CD8-positive, alpha-beta memory T cell (primary cell): ENCODE measurements at regions of chr12 and their contacts with region 1.

Region 1: GRCh38 chr12:122399592-122400373 is 22.7 kb downstream of the CLIP1 start:
- DNase-seq: peak; percentile 14 to 61 (median 53)
- H3K4me3 ChIP-seq: peak overlapping the region; percentile 11
- H3K4me3 Mint-ChIP-seq: no peak overlapping the region
- H3K27ac ChIP-seq: peak overlapping the region; percentile 82
- H3K27ac Mint-ChIP-seq: peak overlapping the region in 7 of 8 donors; percentile 6 to 88 (median 70)
- H3K4me1 ChIP-seq: peaks cover 9% of the 10 kb centered on the region
- H3K4me1 Mint-ChIP-seq: peaks cover 21 to 42% (median 34%) of the 10 kb centered on the region in 3 donors
- H3K27me3 ChIP-seq: no peaks in the 10 kb centered on the region
- H3K27me3 Mint-ChIP-seq: no peaks in the 10 kb centered on the region

Region 2: DNA sequence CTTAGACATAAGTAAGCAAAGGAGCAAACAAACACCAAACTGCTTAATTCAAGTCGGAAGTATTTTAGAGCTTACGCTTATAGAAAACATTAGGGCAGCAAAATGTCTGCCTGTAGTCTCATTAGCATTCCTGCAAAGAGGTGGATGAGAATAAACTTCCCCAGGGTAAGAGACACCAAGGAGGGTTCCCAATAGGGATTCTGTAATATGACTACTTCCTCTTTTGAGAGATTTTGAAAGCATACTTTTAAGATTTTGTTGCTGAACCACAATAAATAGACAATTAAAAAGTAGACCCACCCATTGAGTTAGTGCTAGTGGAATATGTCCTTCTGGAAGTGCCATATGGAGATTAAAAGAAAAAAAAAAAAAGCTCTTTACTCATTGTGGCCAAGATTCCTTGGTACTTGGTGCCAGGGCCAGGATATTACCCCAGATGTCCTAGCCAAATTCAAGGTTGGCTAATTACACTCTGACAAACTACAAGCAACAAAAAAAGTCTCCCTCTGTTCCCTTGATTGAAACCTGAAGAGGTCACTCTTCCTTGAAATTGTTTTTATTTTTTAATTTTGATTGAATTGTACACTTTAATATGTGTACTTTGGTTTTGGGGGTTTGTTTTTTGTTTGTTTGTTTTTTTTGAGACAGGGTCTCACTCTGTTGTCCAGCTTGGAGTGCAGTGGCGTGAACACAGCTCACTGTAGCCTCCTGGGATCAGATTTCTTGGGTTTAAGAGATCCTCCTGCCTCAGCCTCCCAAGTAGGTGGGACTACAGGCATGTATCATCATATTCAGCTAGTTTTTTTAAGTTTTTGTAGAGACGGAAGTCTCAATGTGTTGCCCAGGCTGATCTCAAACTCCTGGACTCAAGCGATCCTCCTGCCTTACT is 14.0 kb after region 1 on chr12:
- CTCF ChIA-PET with region 1: interaction called, 15 read pairs
- POLR2A ChIA-PET with region 1: interaction called, 12 read pairs
- DNase-seq: no peak
- H3K4me3 ChIP-seq: no peak overlapping the region
- H3K4me3 Mint-ChIP-seq: peak overlapping the region in 1 of 7 donors; percentile 73
- H3K27ac ChIP-seq: no peak overlapping the region
- H3K27ac Mint-ChIP-seq: peak overlapping the region in 6 of 8 donors; percentile 22 to 87 (median 52)
- H3K4me1 ChIP-seq: peaks cover 20% of the 10 kb centered on the region
- H3K4me1 Mint-ChIP-seq: peaks cover 26 to 45% (median 34%) of the 10 kb centered on the region in 3 donors
- H3K27me3 ChIP-seq: no peaks in the 10 kb centered on the region
- H3K27me3 Mint-ChIP-seq: no peaks in the 10 kb centered on the region

Region 3: DNA sequence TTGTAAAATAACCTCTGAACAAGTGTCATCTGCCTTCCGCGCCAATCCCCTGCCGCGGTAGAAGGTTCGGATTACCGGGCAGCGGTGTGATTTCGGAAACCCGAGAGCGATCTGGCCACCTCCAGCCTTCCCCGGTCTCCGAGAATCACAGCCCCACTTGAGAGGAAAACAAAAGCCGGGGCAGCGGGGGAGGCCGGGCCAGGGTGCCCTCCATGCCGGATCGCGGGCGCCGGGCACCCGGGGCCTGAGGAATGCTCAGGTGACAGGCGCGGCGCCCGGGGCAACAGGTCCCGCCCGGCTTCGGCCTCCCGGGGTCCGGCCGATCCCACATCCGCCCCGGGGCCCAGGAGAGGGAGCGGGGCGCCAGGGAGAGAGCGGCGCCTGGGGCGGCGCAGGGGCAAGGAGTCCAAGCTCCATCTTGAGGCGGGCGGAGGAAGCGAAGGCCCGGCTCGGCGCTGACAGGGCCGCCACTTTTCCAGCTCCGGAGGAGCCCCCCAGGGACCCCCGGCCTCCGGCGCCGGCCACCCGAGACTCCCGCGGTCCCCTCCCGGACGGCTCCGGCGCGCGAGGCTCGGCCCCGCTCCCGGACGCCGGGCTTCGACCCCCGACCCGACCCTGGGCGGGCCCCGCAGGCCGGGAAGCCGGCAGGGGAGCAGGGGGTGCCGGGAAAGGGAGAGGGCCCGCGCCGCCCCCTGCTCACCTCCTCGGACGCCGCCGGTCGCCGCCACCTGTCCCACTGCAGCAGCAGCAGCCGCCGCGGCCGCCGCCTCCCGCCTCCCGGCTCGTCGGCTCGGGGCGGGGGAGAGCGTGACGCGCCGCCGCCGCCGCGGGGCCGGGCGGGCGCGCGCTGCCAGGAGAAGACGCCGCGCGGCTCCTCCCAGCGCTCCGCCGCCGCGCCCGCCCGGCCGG is 22.3 kb after region 1 on chr12 and contains the start of gene CLIP1:
- CTCF ChIA-PET with region 1: interaction called, 15 read pairs
- POLR2A ChIA-PET with region 1: interaction called, 14 read pairs
- DNase-seq: peak; percentile 46 to 72 (median 56)
- H3K4me3 ChIP-seq: peak within 1 kb of the TSS; percentile 80
- H3K4me3 Mint-ChIP-seq: peak within 1 kb of the TSS; percentile 87 to 97 (median 93)
- H3K27ac ChIP-seq: peak within 1 kb of the TSS; percentile 76
- H3K27ac Mint-ChIP-seq: peak within 1 kb of the TSS; percentile 84 to 98 (median 89)
- H3K4me1 ChIP-seq: peaks cover 27% of the 10 kb centered on the region
- H3K4me1 Mint-ChIP-seq: peaks cover 26 to 45% (median 37%) of the 10 kb centered on the region in 3 donors
- H3K27me3 ChIP-seq: no peaks in the 10 kb centered on the region
- H3K27me3 Mint-ChIP-seq: peaks cover 0 to 3% of the 10 kb centered on the region in 2 donors
- total RNA-seq, gene CLIP1: 43.9 to 48.2 TPM

Region 4: DNA sequence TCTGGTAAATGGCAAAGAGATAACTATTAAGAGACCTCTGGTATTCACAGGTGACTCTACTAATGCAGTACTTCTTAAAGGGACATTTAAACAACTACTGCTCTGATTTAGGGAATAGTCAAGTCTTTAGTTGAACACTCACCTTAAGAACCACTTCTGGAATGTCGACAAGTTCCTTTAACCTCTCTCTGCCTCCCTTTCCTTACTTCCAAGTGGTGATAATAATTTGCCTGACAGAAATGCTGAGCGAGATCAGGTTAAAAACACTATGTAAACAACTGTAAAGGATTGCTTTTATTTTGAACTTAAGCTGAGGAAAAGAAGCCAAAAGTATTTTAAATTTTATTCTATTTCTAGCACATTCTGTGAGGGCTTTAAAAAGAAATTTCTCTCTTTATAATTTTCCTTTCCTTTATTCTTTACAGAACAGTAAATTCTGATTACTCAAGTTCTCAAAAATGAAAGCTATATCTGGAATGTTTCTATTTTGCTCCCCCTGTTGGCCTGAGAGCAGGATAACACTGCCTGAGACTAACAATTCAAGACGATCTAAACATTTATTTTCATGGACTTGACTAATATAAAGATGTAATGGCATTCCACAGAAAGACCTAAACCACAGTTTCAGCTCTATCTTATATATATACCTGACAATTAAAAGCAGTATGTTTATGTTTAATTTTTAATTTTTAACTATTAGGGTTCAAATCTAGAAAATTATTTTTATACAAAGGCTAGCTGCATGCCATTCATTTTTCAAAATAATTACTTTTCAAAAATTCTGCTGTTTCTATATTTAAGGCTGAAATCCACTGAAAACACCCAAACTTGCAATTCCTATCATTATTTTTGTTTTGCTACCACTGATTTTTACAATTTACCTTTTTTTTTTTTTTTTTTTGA is 71.8 kb after region 1 on chr12:
- CTCF ChIA-PET with region 1: interaction called, 152 read pairs
- POLR2A ChIA-PET with region 1: interaction called, 10 read pairs
- DNase-seq: peak in 3 of 5 donors; percentile 47 to 56 (median 54)
- H3K4me3 ChIP-seq: no peak overlapping the region
- H3K4me3 Mint-ChIP-seq: no peak overlapping the region
- H3K27ac ChIP-seq: no peak overlapping the region
- H3K27ac Mint-ChIP-seq: peak overlapping the region in 7 of 8 donors; percentile 10 to 56 (median 33)
- H3K4me1 ChIP-seq: no peaks in the 10 kb centered on the region
- H3K4me1 Mint-ChIP-seq: peaks cover 1 to 12% (median 10%) of the 10 kb centered on the region in 3 donors
- H3K27me3 ChIP-seq: no peaks in the 10 kb centered on the region
- H3K27me3 Mint-ChIP-seq: no peaks in the 10 kb centered on the region

Region 5: GRCh38 chr12:122752464-122753318 is 352.9 kb after region 1 on chr12 and contains the start of gene DENR:
- CTCF ChIA-PET with region 1: interaction called, 11 read pairs
- POLR2A ChIA-PET with region 1: no interaction called
- DNase-seq: peak; percentile 99
- H3K4me3 ChIP-seq: peak within 1 kb of the TSS; percentile 97
- H3K4me3 Mint-ChIP-seq: peak within 1 kb of the TSS; percentile 79 to 97 (median 94)
- H3K27ac ChIP-seq: peak within 1 kb of the TSS; percentile 90
- H3K27ac Mint-ChIP-seq: peak within 1 kb of the TSS; percentile 74 to 99 (median 96)
- H3K4me1 ChIP-seq: peaks cover 27% of the 10 kb centered on the region
- H3K4me1 Mint-ChIP-seq: peaks cover 39 to 59% (median 54%) of the 10 kb centered on the region in 3 donors
- H3K27me3 ChIP-seq: no peaks in the 10 kb centered on the region
- H3K27me3 Mint-ChIP-seq: no peaks in the 10 kb centered on the region
- total RNA-seq, gene DENR: 78.8 to 79.3 TPM